ENCODE measurements at regions of chr6 and their contacts with region 1.

Region 1: GRCh38 chr6:109187399-109188114 is 92.2 kb downstream of the CEP57L1 start:
- DNase-seq: peak; percentile 25
- ATAC-seq: peak; percentile 68; the same call in 2 of the 3 replicates
- H3K4me3 ChIP-seq: no peak overlapping the region
- H3K27ac ChIP-seq: no peak overlapping the region
- H3K4me1 ChIP-seq: peaks cover 7% of the 10 kb centered on the region
- H3K27me3 ChIP-seq: no peaks in the 10 kb centered on the region
- CTCF ChIP-seq: peak; percentile 84
- EP300 ChIP-seq: no peak
- POLR2A ChIP-seq: no peak
- RAD21 ChIP-seq: peak; percentile 83

Region 2: GRCh38 chr6:109236115-109237076 is 48.8 kb after region 1 on chr6:
- CTCF ChIA-PET with region 1: no interaction called
- POLR2A ChIA-PET with region 1: no interaction called
- in situ Hi-C with region 1: no loop called
- intact Hi-C with region 1: loop called (anchors 5 kb)
- DNase-seq: peak; percentile 46
- ATAC-seq: peak; percentile 98
- H3K4me3 ChIP-seq: peak overlapping the region in 1 of 3 experiments; percentile 11; a peak in 1 of 6 replicates
- H3K27ac ChIP-seq: no peak overlapping the region
- H3K4me1 ChIP-seq: peaks cover 41% of the 10 kb centered on the region
- H3K27me3 ChIP-seq: no peaks in the 10 kb centered on the region
- CTCF ChIP-seq: peak; percentile 92
- EP300 ChIP-seq: no peak
- POLR2A ChIP-seq: no peak
- RAD21 ChIP-seq: peak; percentile 70

Region 3: DNA sequence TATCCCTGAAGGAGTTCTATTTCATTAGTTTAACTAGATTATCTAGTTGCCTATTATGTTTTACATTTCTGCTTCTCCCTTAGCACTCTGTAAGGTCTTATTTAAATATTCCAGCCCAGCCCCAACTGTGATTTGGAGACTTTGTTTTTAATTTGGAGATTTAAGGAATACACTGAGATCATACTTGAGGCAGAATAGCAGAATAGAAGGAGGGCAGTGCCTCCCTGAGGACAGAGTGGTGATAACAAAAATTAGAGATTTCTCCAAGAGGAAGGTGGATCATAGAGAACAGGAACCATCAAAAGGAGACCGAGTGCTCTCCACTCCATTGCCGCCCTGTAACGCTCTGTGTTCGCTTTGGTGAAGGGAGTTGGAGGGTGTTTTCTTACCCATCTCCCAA is 209.5 kb after region 1 on chr6:
- CTCF ChIA-PET with region 1: interaction called, 24 read pairs
- POLR2A ChIA-PET with region 1: no interaction called
- in situ Hi-C with region 1: no loop called
- intact Hi-C with region 1: loop called (anchors 1 kb)
- DNase-seq: no peak
- ATAC-seq: peak; percentile 80
- H3K4me3 ChIP-seq: no peak overlapping the region
- H3K27ac ChIP-seq: no peak overlapping the region
- H3K4me1 ChIP-seq: no peaks in the 10 kb centered on the region
- H3K27me3 ChIP-seq: peaks cover 0 to 2% of the 10 kb centered on the region in 2 experiments; a peak in 1 of 5 replicates
- CTCF ChIP-seq: peak; percentile 64
- EP300 ChIP-seq: no peak
- POLR2A ChIP-seq: no peak
- RAD21 ChIP-seq: 0 out of 2 replicates have a peak, but pooled peaks have one; percentile 20

Region 4: GRCh38 chr6:109455502-109456282 is 268.1 kb after region 1 on chr6 and contains the start of gene MICAL1:
- CTCF ChIA-PET with region 1: no interaction called
- POLR2A ChIA-PET with region 1: no interaction called
- in situ Hi-C with region 1: no loop called
- intact Hi-C with region 1: loop called (anchors 5 kb)
- DNase-seq: peak; percentile 30
- ATAC-seq: peak; percentile 89
- H3K4me3 ChIP-seq: peak within 1 kb of the TSS; percentile 66 to 92 (median 90)
- H3K27ac ChIP-seq: no peak within 1 kb of the TSS
- H3K4me1 ChIP-seq: peaks cover 20% of the 10 kb centered on the region
- H3K27me3 ChIP-seq: no peaks in the 10 kb centered on the region
- CTCF ChIP-seq: peak; percentile 17; the same call in 1 of the 2 replicates
- EP300 ChIP-seq: no peak
- POLR2A ChIP-seq: peak; percentile 14 to 35; a peak in 2 of 4 replicates
- RAD21 ChIP-seq: 0 out of 2 replicates have a peak, but pooled peaks have one; percentile 29
- total RNA-seq, gene MICAL1: 1.9 and 6.9 TPM in 2 replicates

Region 5: GRCh38 chr6:109503327-109504224 is 316.0 kb after region 1 on chr6:
- CTCF ChIA-PET with region 1: no interaction called
- POLR2A ChIA-PET with region 1: no interaction called
- in situ Hi-C with region 1: no loop called
- intact Hi-C with region 1: no loop called
- DNase-seq: no peak
- ATAC-seq: peak; percentile 68; the same call in 2 of the 3 replicates
- H3K4me3 ChIP-seq: no peak overlapping the region
- H3K27ac ChIP-seq: no peak overlapping the region
- H3K4me1 ChIP-seq: peaks cover 8% of the 10 kb centered on the region; the same call in 1 of the 2 replicates
- H3K27me3 ChIP-seq: peaks cover 0 to 39% of the 10 kb centered on the region in 2 experiments; a peak in 4 of 5 replicates
- CTCF ChIP-seq: no peak
- EP300 ChIP-seq: no peak
- POLR2A ChIP-seq: no peak
- RAD21 ChIP-seq: no peak